ENCODE measurements at regions of chr17 and their contacts with region 1.

Region 1: GRCh38 chr17:7856883-7857723 is at the start of gene NAA38:
- DNase-seq: peak; percentile 92 to 99
- H3K4me3 ChIP-seq: peak within 1 kb of the TSS; percentile 73 to 76
- H3K27ac ChIP-seq: peak within 1 kb of the TSS; percentile 87 to 88
- H3K4me1 ChIP-seq: peaks cover 9 to 25% of the 10 kb centered on the region in 2 donors
- H3K27me3 ChIP-seq: no peaks in the 10 kb centered on the region
- CTCF ChIP-seq: peak; percentile 39 to 55 (median 51)
- total RNA-seq, gene NAA38: 59.0 TPM

Region 2: DNA sequence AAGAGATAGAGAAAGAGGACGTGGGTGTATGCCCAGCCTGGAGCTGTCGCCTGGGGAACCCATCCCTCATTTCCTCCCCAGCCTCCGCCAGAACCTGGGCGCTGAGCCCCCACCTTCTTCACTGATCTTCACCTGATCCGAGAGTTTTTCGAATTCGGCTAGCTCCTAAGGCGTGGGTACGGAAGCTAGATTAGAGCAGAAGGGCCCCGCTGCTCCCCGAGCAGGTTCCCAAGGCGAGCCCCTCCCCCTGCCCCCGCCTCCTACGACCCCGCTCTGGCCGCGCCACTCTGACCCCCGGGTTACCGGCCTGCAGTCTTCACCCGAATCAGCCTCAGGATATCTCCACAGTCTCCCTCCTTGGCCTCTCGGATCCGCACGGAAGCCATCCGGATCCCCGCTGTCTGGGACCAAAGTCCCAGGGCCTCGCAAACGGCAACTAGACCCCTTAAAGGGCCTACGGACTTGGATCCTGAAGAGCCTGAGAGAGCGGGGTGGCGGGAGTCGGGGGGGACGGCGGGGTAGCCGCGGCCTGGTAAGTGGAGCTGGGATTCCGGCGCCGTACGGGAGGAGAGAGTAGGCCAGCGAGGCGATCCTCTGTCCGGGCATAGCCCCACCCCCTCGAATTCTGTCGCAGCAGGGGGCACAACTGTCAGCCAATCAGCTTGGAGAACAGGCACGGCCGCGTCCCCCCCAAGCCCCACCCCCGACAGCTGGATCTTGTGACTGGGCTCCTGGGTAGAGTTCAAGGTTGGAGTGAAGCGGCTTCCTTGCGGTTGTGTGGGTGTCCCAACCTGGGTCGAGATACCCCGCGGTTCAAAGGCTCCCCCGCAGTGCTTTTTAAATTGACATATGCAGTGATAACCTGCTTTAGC is 229.6 kb before region 1 on chr17 and contains the start of gene SAT2:
- intact Hi-C with region 1: no loop called
- DNase-seq: peak; percentile 80 to 96
- H3K4me3 ChIP-seq: peak within 1 kb of the TSS; percentile 70 to 76
- H3K27ac ChIP-seq: peak within 1 kb of the TSS; percentile 82 to 83
- H3K4me1 ChIP-seq: peaks cover 0 to 4% of the 10 kb centered on the region in 2 donors
- H3K27me3 ChIP-seq: no peaks in the 10 kb centered on the region
- CTCF ChIP-seq: no peak
- total RNA-seq, gene SAT2: 22.6 TPM

Region 3: GRCh38 chr17:7825206-7825990 is 31.7 kb before region 1 on chr17:
- intact Hi-C with region 1: no loop called
- DNase-seq: no peak
- H3K4me3 ChIP-seq: no peak overlapping the region
- H3K27ac ChIP-seq: no peak overlapping the region
- H3K4me1 ChIP-seq: peaks cover 0 to 6% of the 10 kb centered on the region in 2 donors
- H3K27me3 ChIP-seq: no peaks in the 10 kb centered on the region
- CTCF ChIP-seq: no peak

Region 4: DNA sequence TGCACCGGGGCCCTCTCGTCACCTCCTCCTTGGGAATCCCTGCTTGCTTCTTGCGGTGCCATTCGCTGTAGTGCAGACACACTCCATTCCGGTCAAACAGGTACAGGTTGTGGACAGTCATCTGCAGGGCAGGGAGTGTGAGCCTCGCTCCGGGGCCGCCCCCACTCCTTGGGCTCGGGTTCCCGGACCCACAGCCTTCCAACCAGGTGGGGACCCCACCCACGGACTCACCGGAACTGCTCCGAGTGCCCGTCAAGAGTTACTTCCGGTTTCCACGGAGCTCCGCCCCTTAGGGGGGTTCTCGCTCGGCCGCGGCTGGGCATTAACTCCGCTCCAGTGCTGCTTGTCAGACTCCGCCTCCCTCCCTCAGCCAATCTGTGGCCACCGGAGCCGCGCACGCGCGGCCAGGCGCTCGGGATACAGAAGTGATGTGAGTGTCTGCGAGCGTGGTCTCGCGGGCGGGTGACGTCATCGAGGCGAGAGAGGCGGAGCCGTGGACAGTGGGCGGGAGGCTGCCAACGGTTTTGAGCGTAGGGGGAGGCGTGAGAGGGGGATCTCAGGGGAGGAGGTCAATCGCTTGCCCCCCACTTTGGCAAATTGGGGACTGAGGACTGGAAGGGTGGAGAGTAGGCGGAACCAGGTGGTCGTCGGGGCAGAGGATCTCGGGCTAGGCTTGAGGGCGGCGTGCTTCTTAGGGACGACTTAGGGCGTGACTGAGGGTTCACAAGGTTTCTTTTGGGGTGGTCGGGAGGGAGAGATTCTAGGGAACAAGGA is 74.8 kb after region 1 on chr17 and contains the starts of genes CNTROB and TRAPPC1:
- intact Hi-C with region 1: loop called (anchors 1 kb)
- DNase-seq: peak; percentile 100
- H3K4me3 ChIP-seq: peak within 1 kb of the TSS; percentile 76 to 84
- H3K27ac ChIP-seq: peak within 1 kb of the TSS; percentile 27 to 57
- H3K4me1 ChIP-seq: peaks cover 12 to 18% of the 10 kb centered on the region in 2 donors
- H3K27me3 ChIP-seq: no peaks in the 10 kb centered on the region
- CTCF ChIP-seq: no peak
- total RNA-seq, gene CNTROB: 13.7 TPM
- total RNA-seq, gene TRAPPC1: 36.0 TPM

Measured in ascending aorta (tissue), 2 donors.